ENCODE measurements at regions of chr6 and their contacts with region 1.

Region 1: GRCh38 chr6:16700202-16700915 is 60.9 kb downstream of the ATXN1 start:
- DNase-seq: peak; percentile 60 to 86 (median 78)
- H3K4me3 ChIP-seq: peak overlapping the region in 6 of 7 experiments; percentile 54 to 81 (median 64)
- H3K27ac ChIP-seq: peak overlapping the region; percentile 80 to 92
- H3K4me1 ChIP-seq: peaks cover 30 to 75% (median 50%) of the 10 kb centered on the region in 4 experiments
- H3K27me3 ChIP-seq: no peaks in the 10 kb centered on the region

Region 2: GRCh38 chr6:16688984-16689636 is 11.2 kb before region 1 on chr6:
- CTCF ChIA-PET with region 1: interaction called, 13 read pairs
- POLR2A ChIA-PET with region 1: no interaction called
- DNase-seq: no peak
- H3K4me3 ChIP-seq: no peak overlapping the region
- H3K27ac ChIP-seq: no peak overlapping the region
- H3K4me1 ChIP-seq: peaks cover 17 to 46% (median 25%) of the 10 kb centered on the region in 4 experiments
- H3K27me3 ChIP-seq: no peaks in the 10 kb centered on the region

Region 3: DNA sequence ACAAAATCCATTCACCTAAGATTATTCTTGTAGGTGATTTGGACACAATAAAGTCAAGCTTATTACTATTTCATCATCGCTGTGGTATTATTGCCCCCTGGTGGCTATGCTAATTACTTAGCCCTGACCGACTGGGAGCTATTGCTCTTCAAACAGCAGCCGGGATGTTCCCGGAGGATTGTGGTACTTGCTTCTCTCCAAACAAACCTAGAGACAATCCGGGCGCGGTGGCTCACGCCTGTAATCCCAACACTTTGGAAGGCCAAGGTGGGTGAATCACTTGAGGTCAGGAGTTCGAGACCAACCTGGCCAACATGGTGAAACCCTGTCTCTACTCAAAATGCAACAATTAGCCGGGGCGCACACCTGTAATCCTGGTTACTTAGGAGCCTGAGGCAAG is 386.1 kb after region 1 on chr6:
- CTCF ChIA-PET with region 1: no interaction called
- POLR2A ChIA-PET with region 1: no interaction called
- DNase-seq: peak; percentile 41 to 58 (median 48)
- H3K4me3 ChIP-seq: no peak overlapping the region
- H3K27ac ChIP-seq: no peak overlapping the region
- H3K4me1 ChIP-seq: no peaks in the 10 kb centered on the region
- H3K27me3 ChIP-seq: peaks cover 0 to 4% (median 2%) of the 10 kb centered on the region in 5 experiments